Sciatic nerve (tissue), 2 donors: ENCODE measurements at regions of chr16 and their contacts with region 1.

Region 1: DNA sequence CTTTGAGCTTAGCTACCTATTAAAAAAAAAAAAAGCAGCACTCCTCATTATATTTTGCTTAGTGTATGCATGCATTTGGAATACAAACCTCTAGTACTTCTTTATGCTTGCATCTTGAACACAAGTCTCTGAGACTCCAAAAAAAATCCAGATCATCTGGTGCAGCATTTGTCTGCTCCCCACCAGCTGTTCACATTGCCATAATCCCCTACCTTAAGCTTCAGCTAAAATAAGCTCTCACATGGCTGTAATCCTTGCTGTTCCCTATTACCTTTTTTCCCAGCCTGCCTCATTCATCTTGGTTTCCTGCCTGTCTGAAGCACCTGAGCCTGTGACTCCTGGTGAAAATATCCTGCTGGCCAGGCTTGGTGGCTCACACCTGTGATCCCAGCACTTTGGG is 7.5 kb upstream of the NFATC2IP start:
- DNase-seq: no peak
- ATAC-seq: no peak

Region 2: DNA sequence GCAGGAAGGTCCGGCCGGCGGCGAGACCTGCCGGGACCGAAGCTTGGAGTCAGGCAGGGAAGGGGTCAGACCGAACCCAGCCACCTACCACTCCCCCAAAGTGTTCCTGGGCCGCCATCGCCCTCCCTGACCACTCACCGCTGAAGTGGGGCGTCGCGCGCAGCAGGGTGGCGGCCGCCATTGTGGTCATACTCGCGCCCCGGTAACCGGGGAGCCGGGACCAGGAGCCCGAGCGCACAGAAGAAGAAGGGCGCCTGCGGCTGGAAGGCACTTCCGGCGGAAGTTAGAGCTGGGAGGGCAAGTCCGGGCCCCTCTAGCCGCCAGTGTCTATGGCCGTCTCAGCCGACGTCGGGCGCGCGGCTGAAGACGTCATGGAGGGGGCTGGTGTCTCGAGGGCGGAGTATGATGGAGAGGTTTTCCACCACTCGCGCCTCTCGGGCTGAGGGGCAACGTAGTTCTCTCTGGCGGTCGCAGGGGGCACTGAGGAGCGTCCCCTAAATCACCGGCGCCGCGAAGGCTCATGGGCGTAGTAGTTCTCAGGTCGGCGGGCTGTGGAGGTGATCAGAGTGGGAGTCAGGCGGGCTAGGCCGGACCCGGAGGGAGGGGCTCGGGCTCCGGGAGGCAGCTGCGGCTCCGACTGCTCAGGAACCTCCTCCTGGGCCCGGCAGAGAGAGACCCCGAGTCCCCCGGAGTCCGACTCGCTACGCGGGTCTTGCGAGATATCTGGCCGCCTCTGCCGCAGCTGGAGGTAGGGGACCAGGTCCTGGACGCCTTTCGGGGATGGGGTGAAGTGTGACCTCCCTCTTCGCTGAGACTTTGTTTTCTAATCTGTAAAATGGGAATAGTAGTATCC is 97.0 kb before region 1 on chr16 and contains the start of gene TUFM:
- intact Hi-C with region 1: loop called (anchors 10 kb)
- DNase-seq: peak; percentile 98
- ATAC-seq: peak; percentile 99
- total RNA-seq, gene TUFM: 69.4 TPM